AG04450 (cell line): ENCODE measurements at regions of chr10 and their contacts with region 1.

Region 1: DNA sequence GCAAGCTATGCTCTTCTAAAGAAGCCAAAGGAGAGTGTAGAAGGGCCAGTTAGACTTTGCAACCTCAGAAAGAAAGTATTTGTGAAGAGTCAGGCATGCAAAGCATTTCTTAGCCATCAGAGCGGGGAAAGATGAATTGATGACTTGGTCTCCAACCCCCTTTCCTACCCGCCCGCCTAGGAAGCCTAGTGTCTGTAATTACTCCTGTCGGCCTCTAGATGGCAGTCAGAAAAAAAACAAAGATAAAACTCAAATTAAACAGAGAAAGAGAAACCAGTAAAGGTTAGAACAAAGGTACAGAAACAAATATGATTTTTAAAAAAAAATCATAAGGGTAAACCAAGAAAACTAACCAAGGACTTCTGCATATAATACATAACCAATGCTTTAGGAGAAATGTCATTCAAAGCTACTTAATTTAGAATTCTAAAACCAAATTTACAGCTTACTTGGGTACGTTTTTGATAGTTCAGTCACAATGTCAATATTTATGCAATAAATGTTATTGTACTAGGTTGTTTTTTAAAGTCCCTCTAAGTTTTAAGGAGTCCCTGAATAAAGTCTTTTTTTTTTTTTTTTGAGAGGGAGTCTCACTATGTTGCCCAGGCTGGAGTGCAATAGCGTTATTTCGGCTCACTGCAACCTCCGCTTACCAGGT is 97.6 kb downstream of the LYZL1 start:
- DNase-seq: no peak
- H3K4me3 ChIP-seq: no peak overlapping the region
- H3K27ac ChIP-seq: no peak overlapping the region
- H3K27me3 ChIP-seq: peaks cover 14% of the 10 kb centered on the region
- CTCF ChIP-seq: peak; percentile 74

Region 2: DNA sequence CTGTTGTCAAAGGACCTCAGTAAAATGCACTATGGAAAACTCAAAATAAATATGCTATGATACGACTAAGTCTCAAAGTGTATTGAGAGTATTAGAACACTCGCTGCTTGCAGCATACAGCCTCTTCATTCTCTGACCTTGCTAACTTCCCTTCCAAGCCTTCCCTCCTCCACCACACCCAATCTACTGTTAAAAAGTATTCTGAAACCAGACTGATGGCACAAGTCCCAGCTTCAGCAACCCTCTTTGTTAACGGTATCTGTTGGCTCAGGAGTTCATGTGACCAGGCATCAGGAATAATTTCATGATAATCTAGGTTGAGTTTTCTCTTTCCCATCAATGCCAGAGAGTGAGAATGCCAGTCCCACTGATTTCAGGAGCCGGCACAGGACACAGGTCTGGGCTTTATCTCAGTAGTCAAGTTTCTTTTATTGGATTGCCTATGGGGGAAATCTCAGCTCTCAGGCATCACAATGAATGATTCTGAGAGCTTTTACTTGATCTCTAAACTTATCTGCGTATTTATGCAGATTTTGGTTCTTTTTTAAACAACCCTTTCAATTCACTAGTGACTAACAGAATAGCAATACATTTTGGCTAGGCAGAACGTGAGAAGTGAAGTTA is 328.6 kb before region 1 on chr10:
- CTCF ChIA-PET with region 1: no interaction called
- POLR2A ChIA-PET with region 1: no interaction called
- DNase-seq: no peak
- H3K4me3 ChIP-seq: no peak overlapping the region; the same call in 1 of the 2 replicates
- H3K27ac ChIP-seq: no peak overlapping the region
- H3K27me3 ChIP-seq: peaks cover 7% of the 10 kb centered on the region
- CTCF ChIP-seq: no peak

Region 3: DNA sequence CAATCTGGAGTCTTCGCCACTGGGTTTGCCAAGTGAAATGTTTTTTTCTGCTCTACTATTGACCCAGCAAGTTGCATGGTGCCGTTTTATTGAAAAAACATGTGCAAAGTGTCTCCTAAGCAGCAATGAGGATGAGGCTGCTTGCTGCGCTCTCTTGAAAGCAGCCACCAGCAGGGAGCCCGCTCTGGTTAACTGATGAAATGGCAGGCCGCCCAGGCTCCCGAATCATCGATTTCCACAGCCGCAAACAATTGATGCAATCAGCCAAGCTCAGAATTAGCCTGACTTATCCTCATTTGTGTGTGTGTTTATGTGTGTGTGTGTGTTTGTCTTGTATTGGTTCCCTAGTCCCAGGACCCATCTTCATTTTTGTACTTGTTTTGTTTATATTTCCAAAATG is 119.8 kb before region 1 on chr10:
- CTCF ChIA-PET with region 1: no interaction called
- POLR2A ChIA-PET with region 1: no interaction called
- DNase-seq: no peak
- H3K4me3 ChIP-seq: no peak overlapping the region
- H3K27ac ChIP-seq: no peak overlapping the region
- H3K27me3 ChIP-seq: peaks cover 5% of the 10 kb centered on the region
- CTCF ChIP-seq: no peak

Region 4: DNA sequence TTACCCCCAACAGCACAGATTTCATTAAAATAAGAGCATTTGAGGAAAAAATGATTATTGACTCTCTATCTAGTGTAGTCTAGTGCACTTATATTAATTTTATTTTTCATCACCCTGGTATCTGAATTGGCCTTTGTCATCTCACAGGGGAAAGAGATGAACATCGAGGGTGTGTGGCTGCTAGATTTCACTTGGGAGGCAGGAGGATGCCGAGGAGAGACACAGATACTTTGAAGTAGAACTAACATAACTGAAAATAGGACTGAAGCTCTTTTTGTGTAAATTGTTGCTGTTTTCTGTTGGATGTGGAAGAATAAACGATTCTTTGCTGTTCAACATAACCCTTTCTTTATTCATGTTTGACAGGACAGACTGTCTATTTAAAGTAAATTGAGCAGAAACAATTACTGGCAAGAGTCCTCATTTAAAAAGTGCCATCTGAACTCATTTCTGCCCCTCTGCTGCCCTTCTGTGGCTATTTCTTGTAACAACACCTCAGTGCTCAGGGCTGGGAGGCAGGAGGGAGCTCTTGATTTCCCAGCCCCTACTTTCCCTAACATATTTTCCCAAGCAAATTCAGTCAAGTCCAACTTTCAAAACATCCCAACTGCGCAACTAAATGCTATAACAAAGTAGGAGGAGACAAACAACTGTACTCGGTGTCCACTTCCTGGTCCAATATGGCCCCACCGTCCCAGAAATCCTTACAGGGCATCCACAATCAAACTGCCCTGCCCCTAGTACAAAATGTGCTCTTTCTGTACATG is 82.0 kb before region 1 on chr10:
- CTCF ChIA-PET with region 1: no interaction called
- POLR2A ChIA-PET with region 1: no interaction called
- DNase-seq: peak; percentile 45
- H3K4me3 ChIP-seq: no peak overlapping the region
- H3K27ac ChIP-seq: no peak overlapping the region
- H3K27me3 ChIP-seq: no peaks in the 10 kb centered on the region
- CTCF ChIP-seq: peak; percentile 81

Region 5: GRCh38 chr10:29409241-29410057 is 23.0 kb after region 1 on chr10:
- CTCF ChIA-PET with region 1: interaction called, 36 read pairs
- POLR2A ChIA-PET with region 1: interaction called, 3 read pairs
- DNase-seq: peak; percentile 8
- H3K4me3 ChIP-seq: peak overlapping the region; percentile 92
- H3K27ac ChIP-seq: peak overlapping the region; percentile 59
- H3K27me3 ChIP-seq: no peaks in the 10 kb centered on the region
- CTCF ChIP-seq: 0 out of 2 replicates have a peak, but pooled peaks have one; percentile 1

Region 6: GRCh38 chr10:29446327-29446726 is 59.9 kb after region 1 on chr10:
- CTCF ChIA-PET with region 1: interaction called, 20 read pairs
- POLR2A ChIA-PET with region 1: no interaction called
- DNase-seq: no peak
- H3K4me3 ChIP-seq: no peak overlapping the region
- H3K27ac ChIP-seq: no peak overlapping the region
- H3K27me3 ChIP-seq: no peaks in the 10 kb centered on the region
- CTCF ChIP-seq: no peak